ENCODE measurements at regions of chr3 and their contacts with region 1.

Region 1: GRCh38 chr3:45870099-45870498 is 16.2 kb upstream of the CCR9 start:
- DNase-seq: peak in 8 of 9 donors; percentile 33 to 92 (median 88)
- ATAC-seq: peak; percentile 96
- H3K4me3 ChIP-seq: no peak overlapping the region
- H3K4me3 Mint-ChIP-seq: peak overlapping the region in 9 of 10 donors; percentile 0 to 74 (median 45)
- H3K27ac ChIP-seq: no peak overlapping the region
- H3K27ac Mint-ChIP-seq: peak overlapping the region in 8 of 9 donors; percentile 5 to 85 (median 44)
- H3K4me1 ChIP-seq: peaks cover 27 to 28% of the 10 kb centered on the region in 2 donors
- H3K4me1 Mint-ChIP-seq: peaks cover 18 to 58% (median 45%) of the 10 kb centered on the region in 7 donors
- H3K27me3 ChIP-seq: no peaks in the 10 kb centered on the region
- H3K27me3 Mint-ChIP-seq: peaks cover 0 to 70% (median 0%) of the 10 kb centered on the region in 5 donors

Region 2: GRCh38 chr3:45730409-45731154 is 139.5 kb before region 1 on chr3:
- CTCF ChIA-PET with region 1: no interaction called
- POLR2A ChIA-PET with region 1: no interaction called
- intact Hi-C with region 1: no loop called
- DNase-seq: no peak
- ATAC-seq: no peak
- H3K4me3 ChIP-seq: no peak overlapping the region
- H3K4me3 Mint-ChIP-seq: no peak overlapping the region
- H3K27ac ChIP-seq: no peak overlapping the region
- H3K27ac Mint-ChIP-seq: peak overlapping the region in 2 of 9 donors; percentile 34 to 48
- H3K4me1 ChIP-seq: no peaks in the 10 kb centered on the region
- H3K4me1 Mint-ChIP-seq: peaks cover 19 to 30% (median 22%) of the 10 kb centered on the region in 7 donors
- H3K27me3 ChIP-seq: no peaks in the 10 kb centered on the region
- H3K27me3 Mint-ChIP-seq: no peaks in the 10 kb centered on the region

Region 3: DNA sequence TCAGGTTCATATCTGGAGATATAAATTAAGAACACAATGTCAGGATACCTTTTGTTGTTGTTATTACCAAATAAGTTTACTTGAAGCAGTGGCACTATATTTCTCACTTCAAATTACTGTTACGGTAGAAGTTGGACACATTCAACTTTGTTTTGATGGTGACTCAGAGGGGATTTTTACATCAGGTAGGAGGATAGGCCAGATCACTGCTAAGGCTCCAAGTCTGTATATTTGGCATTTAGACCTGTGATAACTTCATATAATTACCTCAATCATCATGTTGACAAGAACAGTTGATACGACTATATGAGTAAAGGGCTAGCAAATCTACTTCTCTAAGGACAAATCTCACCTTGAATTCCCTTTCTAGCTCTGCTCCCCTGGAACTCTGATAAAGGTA is 43.8 kb before region 1 on chr3:
- CTCF ChIA-PET with region 1: no interaction called
- POLR2A ChIA-PET with region 1: interaction called, 5 read pairs
- intact Hi-C with region 1: loop called in 1 of 2 experiments (anchors 5 kb)
- DNase-seq: no peak
- ATAC-seq: no peak
- H3K4me3 ChIP-seq: no peak overlapping the region
- H3K4me3 Mint-ChIP-seq: no peak overlapping the region
- H3K27ac ChIP-seq: no peak overlapping the region
- H3K27ac Mint-ChIP-seq: no peak overlapping the region
- H3K4me1 ChIP-seq: no peaks in the 10 kb centered on the region
- H3K4me1 Mint-ChIP-seq: peaks cover 0 to 11% (median 0%) of the 10 kb centered on the region in 7 donors
- H3K27me3 ChIP-seq: no peaks in the 10 kb centered on the region
- H3K27me3 Mint-ChIP-seq: no peaks in the 10 kb centered on the region

Region 4: GRCh38 chr3:45892161-45892560 is 22.1 kb after region 1 on chr3:
- CTCF ChIA-PET with region 1: no interaction called
- POLR2A ChIA-PET with region 1: interaction called, 5 read pairs
- intact Hi-C with region 1: loop called in 1 of 2 experiments (anchors 1 kb)
- DNase-seq: no peak
- ATAC-seq: no peak
- H3K4me3 ChIP-seq: no peak overlapping the region
- H3K4me3 Mint-ChIP-seq: peak overlapping the region in 3 of 10 donors; percentile 16 to 70 (median 54)
- H3K27ac ChIP-seq: no peak overlapping the region
- H3K27ac Mint-ChIP-seq: peak overlapping the region in 4 of 9 donors; percentile 70 to 90 (median 78)
- H3K4me1 ChIP-seq: peaks cover 0 to 14% of the 10 kb centered on the region in 2 donors
- H3K4me1 Mint-ChIP-seq: peaks cover 16 to 63% (median 46%) of the 10 kb centered on the region in 7 donors
- H3K27me3 ChIP-seq: no peaks in the 10 kb centered on the region
- H3K27me3 Mint-ChIP-seq: peaks cover 0 to 70% (median 0%) of the 10 kb centered on the region in 5 donors

Region 5: DNA sequence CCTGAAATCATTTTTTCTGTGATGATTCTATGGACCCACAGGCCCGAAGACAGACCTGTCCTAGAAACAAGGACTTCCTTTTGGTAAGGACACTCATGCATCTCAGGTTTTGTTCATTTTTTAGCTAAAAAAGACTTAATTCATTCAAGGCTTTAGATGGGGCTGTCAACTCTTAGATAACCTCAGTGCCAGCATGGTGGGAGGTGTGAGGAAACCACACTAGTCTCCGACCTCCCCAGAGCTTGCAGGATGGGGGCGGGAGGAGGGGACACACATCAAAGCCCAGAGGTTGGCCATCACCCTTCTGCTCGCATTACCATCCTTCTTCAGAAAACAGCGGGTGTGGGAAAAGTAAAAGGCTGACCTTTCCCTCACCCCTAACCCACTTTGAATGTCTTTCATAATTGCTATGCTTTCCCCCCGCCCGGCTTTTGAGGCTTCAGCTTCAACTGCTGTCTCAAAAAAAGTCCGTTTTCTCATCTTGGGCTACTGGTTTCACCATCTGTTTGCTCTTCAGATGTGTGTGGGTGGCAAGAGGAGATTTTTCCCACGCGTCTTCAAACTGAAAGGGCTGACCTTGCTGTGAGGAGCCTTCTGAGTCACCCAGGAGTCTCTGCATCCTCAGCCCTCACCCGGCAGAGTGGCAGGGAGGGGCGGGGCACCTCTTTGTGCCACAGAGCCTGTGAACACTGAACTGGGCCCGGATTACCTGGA is 45.6 kb after region 1 on chr3:
- CTCF ChIA-PET with region 1: no interaction called
- POLR2A ChIA-PET with region 1: no interaction called
- intact Hi-C with region 1: loop called in 1 of 2 experiments (anchors 2 kb)
- DNase-seq: peak in 8 of 9 donors; percentile 24 to 81 (median 38)
- ATAC-seq: peak; percentile 86
- H3K4me3 ChIP-seq: peak overlapping the region; percentile 53
- H3K4me3 Mint-ChIP-seq: peak overlapping the region; percentile 70 to 90 (median 83)
- H3K27ac ChIP-seq: no peak overlapping the region
- H3K27ac Mint-ChIP-seq: peak overlapping the region; percentile 36 to 82 (median 69)
- H3K4me1 ChIP-seq: peaks cover 15 to 24% of the 10 kb centered on the region in 2 donors
- H3K4me1 Mint-ChIP-seq: peaks cover 17 to 45% (median 25%) of the 10 kb centered on the region in 7 donors
- H3K27me3 ChIP-seq: no peaks in the 10 kb centered on the region
- H3K27me3 Mint-ChIP-seq: peaks cover 0 to 41% (median 0%) of the 10 kb centered on the region in 5 donors

Region 6: GRCh38 chr3:46266598-46266997 is 396.5 kb after region 1 on chr3:
- CTCF ChIA-PET with region 1: no interaction called
- POLR2A ChIA-PET with region 1: no interaction called
- intact Hi-C with region 1: no loop called
- DNase-seq: no peak
- ATAC-seq: no peak
- H3K4me3 ChIP-seq: no peak overlapping the region
- H3K4me3 Mint-ChIP-seq: no peak overlapping the region
- H3K27ac ChIP-seq: no peak overlapping the region
- H3K27ac Mint-ChIP-seq: no peak overlapping the region
- H3K4me1 ChIP-seq: peaks cover 0 to 26% of the 10 kb centered on the region in 2 donors
- H3K4me1 Mint-ChIP-seq: peaks cover 0 to 42% (median 5%) of the 10 kb centered on the region in 7 donors
- H3K27me3 ChIP-seq: no peaks in the 10 kb centered on the region
- H3K27me3 Mint-ChIP-seq: peaks cover 0 to 35% (median 4%) of the 10 kb centered on the region in 5 donors